ENCODE measurements at regions of chr4 and their contacts with region 1.

Region 1: DNA sequence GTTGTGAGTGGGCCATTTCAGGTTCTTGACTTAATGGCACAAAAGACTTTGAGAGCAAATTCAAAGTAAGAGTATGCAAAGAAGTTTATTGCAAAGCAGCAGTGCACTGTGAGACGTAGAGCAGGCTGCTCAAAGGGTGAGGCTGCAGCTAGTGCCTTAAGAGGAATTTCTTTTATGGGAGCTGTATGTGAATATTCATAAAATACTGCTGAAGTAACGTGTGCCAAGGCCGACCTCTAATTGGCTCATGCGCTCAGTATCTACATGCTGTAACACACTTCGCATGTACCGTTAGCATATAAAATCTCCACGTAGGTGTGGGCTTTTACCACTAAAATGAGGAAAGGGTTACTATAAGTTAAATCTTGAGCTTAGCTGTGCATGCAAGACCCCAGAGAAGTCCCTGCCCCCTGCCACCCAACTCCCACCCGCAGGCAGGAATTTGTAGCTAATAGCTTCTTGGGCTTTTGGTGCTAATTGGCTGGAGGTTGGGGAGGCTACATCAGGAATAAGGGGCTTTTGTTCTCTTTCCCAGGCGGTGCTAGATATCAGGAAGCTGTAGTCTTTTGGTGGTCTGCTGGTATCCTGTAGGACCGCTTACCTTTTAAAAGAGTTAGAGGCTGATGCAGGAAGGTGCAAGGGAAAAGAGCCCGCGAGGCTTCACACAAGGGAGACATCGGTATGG is 47.6 kb downstream of the FSTL5 start:
- DNase-seq: no peak
- ATAC-seq: no peak

Region 2: GRCh38 chr4:162056990-162057389 is 59.2 kb before region 1 on chr4:
- intact Hi-C with region 1: loop called (anchors 2 kb)
- DNase-seq: no peak
- ATAC-seq: no peak